AG04450 (cell line): ENCODE measurements at regions of chr5 and their contacts with region 1.

Region 1: DNA sequence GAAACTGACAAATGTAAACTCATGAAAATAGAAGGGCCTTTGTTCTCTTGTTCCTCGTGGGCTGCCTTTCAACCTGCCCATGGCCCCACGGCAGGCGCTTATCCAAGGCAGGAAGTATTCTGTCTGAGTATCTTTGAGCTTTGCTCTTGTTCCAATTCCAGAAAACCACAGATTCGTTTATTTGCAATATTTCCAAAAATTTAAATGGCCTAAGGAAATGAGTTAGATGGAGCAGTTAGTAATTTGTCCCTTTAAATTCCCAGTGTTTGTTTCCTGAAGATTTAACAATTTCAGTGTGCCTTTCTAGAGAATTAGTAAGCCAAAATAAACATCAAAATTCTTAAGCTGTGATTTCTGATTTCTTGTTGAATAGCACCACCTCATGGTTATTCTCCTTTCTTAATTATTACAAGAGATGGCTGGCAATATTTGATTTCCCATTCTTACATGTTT is 299.4 kb upstream of the RASA1 start:
- DNase-seq: peak; percentile 7
- H3K4me3 ChIP-seq: no peak overlapping the region; the same call in 1 of the 2 replicates
- H3K27ac ChIP-seq: no peak overlapping the region
- H3K27me3 ChIP-seq: no peaks in the 10 kb centered on the region
- CTCF ChIP-seq: peak; percentile 42

Region 2: GRCh38 chr5:86951761-86952160 is 16.6 kb before region 1 on chr5:
- CTCF ChIA-PET with region 1: interaction called, 13 read pairs
- POLR2A ChIA-PET with region 1: no interaction called
- DNase-seq: no peak
- H3K4me3 ChIP-seq: no peak overlapping the region
- H3K27ac ChIP-seq: no peak overlapping the region
- H3K27me3 ChIP-seq: no peaks in the 10 kb centered on the region
- CTCF ChIP-seq: no peak

Region 3: GRCh38 chr5:86979811-86980411 is 11.6 kb after region 1 on chr5:
- CTCF ChIA-PET with region 1: interaction called, 12 read pairs
- POLR2A ChIA-PET with region 1: no interaction called
- DNase-seq: peak; percentile 10
- H3K4me3 ChIP-seq: no peak overlapping the region
- H3K27ac ChIP-seq: no peak overlapping the region
- H3K27me3 ChIP-seq: no peaks in the 10 kb centered on the region
- CTCF ChIP-seq: no peak

Region 4: DNA sequence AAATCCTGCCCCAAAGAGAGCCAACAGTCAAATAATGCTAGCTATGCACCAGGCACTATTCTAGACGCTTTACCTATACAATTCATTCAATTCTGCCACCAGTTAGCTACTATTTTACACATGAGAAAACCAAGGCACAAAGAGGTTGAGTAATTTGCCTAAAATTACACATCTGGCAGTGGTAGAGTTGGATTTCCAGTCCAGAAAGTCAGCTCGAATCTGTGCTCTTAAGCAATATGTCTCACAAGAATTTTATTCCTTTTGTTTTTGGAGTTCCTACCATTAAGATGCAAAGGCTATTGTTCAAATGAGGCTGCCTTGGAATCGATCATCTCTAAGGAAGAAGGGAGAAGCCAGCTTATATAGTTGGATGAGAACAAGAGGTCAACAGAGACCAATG is 42.4 kb after region 1 on chr5:
- CTCF ChIA-PET with region 1: interaction called, 56 read pairs
- POLR2A ChIA-PET with region 1: no interaction called
- DNase-seq: no peak
- H3K4me3 ChIP-seq: no peak overlapping the region
- H3K27ac ChIP-seq: no peak overlapping the region
- H3K27me3 ChIP-seq: no peaks in the 10 kb centered on the region
- CTCF ChIP-seq: no peak